ENCODE measurements at regions of chr5 and their contacts with region 1.

Region 1: DNA sequence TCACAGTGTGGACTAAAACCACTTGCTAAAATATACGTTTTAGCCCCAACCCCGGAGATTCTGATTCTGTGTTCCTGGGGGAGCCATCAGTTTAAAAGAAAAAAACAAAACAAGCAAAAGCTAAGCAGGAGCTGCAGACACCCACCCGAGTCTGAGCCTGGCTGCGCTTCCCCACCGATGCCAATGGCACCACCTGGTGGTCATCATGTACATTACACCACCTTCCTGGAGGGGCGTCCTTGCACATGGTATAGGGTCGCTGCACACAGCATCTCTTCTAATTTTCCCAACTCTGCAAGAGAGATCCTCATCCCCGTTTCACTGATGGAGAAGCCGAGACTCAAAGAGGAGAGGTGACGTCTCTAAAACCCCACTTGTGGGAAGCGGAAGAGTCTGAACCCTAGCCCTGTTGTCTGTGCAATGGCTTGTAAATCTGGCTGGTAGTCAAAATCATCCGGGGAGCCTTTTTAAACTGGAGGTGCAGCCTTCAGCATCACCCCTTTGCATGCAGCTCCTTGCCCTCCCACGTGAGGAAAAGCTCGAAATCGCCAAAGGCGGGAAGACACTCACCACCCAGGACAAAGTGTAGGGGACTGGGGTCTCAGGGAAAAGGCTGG is 23.1 kb upstream of the CNOT6 start:
- DNase-seq: peak in 1 of 2 donors; percentile 53
- ATAC-seq: peak; percentile 26

Region 2: DNA sequence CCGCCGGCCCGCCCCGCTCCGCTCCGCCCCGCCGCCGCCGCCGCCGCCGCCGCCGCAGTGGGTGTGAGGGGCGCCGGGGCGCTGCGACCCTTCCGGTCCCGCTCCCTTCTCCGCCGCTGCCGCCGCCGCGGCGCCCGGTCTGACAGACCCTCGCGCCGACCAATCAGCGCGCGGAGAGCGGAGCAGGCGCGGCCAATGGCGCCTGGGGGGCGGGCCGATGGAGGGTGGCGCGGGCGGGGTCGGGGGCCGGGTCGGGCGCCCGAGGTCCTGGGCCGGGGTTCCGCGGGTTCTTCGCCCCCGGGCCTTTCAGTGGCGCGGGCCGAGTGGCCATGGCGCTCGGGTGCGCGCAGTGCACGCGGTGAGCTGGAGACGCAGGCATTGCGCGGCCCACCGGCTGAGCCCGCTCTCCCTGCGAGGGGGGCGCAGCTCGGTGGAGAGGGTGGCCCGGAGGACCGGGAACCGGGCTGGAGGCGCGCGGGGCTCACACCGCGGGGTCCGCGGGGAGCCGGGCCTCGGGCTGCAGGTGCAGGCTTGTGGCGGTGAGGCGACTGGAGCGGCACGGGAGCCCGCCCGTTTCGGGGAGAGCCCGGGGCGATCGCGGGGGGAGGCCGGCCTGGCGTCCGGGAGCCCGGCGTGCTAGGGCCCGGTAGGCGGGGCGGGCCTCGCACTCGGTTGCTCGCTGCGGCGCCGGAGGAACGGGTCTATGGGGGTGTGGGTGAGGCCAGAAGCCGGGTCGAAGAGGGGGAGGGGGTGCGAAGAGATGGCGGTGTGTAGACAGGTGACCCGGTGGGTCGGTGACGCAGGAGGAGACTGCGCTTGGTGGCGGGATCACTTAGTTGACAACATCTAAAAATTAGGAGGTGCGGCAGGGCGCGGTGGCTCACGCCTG is 178.9 kb before region 1 on chr5 and contains the start of gene MAPK9:
- intact Hi-C with region 1: loop called in 1 of 2 experiments (anchors 5 kb)
- DNase-seq: peak; percentile 80 to 90
- ATAC-seq: peak; percentile 80
- total RNA-seq, gene MAPK9: 40.9 to 49.8 TPM

Measured in left colon (tissue), 2 donors.